ENCODE measurements at regions of chr14 and their contacts with region 1.

Region 1: GRCh38 chr14:21768116-21768874 is 94.7 kb upstream of the OR4E1 start:
- DNase-seq: peak in 1 of 2 experiments; percentile 22
- H3K4me3 ChIP-seq: no peak overlapping the region
- H3K4me3 Mint-ChIP-seq: no peak overlapping the region
- H3K27ac Mint-ChIP-seq: no peak overlapping the region
- H3K4me1 ChIP-seq: 0 out of 2 replicates have a peak, but pooled peaks cover 6% of the 10 kb centered on the region
- H3K4me1 Mint-ChIP-seq: peaks cover 7% of the 10 kb centered on the region
- H3K27me3 ChIP-seq: no peaks in the 10 kb centered on the region
- H3K27me3 Mint-ChIP-seq: peaks cover 5% of the 10 kb centered on the region
- CTCF ChIP-seq: peak; percentile 52 to 58

Region 2: GRCh38 chr14:21686468-21686867 is 81.8 kb before region 1 on chr14:
- CTCF ChIA-PET with region 1: no interaction called
- POLR2A ChIA-PET with region 1: no interaction called
- intact Hi-C with region 1: no loop called
- DNase-seq: no peak
- H3K4me3 ChIP-seq: no peak overlapping the region
- H3K4me3 Mint-ChIP-seq: peak overlapping the region; percentile 18
- H3K27ac Mint-ChIP-seq: peak overlapping the region; percentile 23
- H3K4me1 ChIP-seq: peaks cover 22% of the 10 kb centered on the region
- H3K4me1 Mint-ChIP-seq: peaks cover 24% of the 10 kb centered on the region
- H3K27me3 ChIP-seq: no peaks in the 10 kb centered on the region
- H3K27me3 Mint-ChIP-seq: no peaks in the 10 kb centered on the region
- CTCF ChIP-seq: no peak

Region 3: GRCh38 chr14:21825149-21825743 is 57.0 kb after region 1 on chr14:
- CTCF ChIA-PET with region 1: interaction called, 4 read pairs
- POLR2A ChIA-PET with region 1: no interaction called
- intact Hi-C with region 1: loop called (anchors 1 kb)
- DNase-seq: peak; percentile 49 to 53
- H3K4me3 ChIP-seq: no peak overlapping the region
- H3K4me3 Mint-ChIP-seq: no peak overlapping the region
- H3K27ac Mint-ChIP-seq: no peak overlapping the region
- H3K4me1 ChIP-seq: no peaks in the 10 kb centered on the region
- H3K4me1 Mint-ChIP-seq: no peaks in the 10 kb centered on the region
- H3K27me3 ChIP-seq: no peaks in the 10 kb centered on the region; the same call in 1 of the 2 replicates
- H3K27me3 Mint-ChIP-seq: peaks cover 14% of the 10 kb centered on the region
- CTCF ChIP-seq: peak; percentile 57 to 72

Region 4: GRCh38 chr14:21868442-21869046 is 100.2 kb after region 1 on chr14:
- CTCF ChIA-PET with region 1: no interaction called
- POLR2A ChIA-PET with region 1: no interaction called
- intact Hi-C with region 1: loop called (anchors 10 kb)
- DNase-seq: peak; percentile 50 to 65
- H3K4me3 ChIP-seq: no peak overlapping the region
- H3K4me3 Mint-ChIP-seq: no peak overlapping the region
- H3K27ac Mint-ChIP-seq: no peak overlapping the region
- H3K4me1 ChIP-seq: no peaks in the 10 kb centered on the region
- H3K4me1 Mint-ChIP-seq: no peaks in the 10 kb centered on the region
- H3K27me3 ChIP-seq: no peaks in the 10 kb centered on the region
- H3K27me3 Mint-ChIP-seq: peaks cover 12% of the 10 kb centered on the region
- CTCF ChIP-seq: peak; percentile 69 to 74